Esophagus muscularis mucosa (tissue), 4 donors: ENCODE measurements at regions of chr5 and their contacts with region 1.

Region 1: GRCh38 chr5:128905571-128906110 is 59.6 kb upstream of the SLC27A6 start:
- DNase-seq: no peak
- H3K4me3 ChIP-seq: no peak overlapping the region
- H3K27ac ChIP-seq: no peak overlapping the region
- H3K4me1 ChIP-seq: peaks cover 0 to 16% (median 3%) of the 10 kb centered on the region in 4 donors
- H3K27me3 ChIP-seq: no peaks in the 10 kb centered on the region
- CTCF ChIP-seq: peak; percentile 77 to 87 (median 82)
- EP300 ChIP-seq: no peak
- POLR2A ChIP-seq: no peak

Region 2: DNA sequence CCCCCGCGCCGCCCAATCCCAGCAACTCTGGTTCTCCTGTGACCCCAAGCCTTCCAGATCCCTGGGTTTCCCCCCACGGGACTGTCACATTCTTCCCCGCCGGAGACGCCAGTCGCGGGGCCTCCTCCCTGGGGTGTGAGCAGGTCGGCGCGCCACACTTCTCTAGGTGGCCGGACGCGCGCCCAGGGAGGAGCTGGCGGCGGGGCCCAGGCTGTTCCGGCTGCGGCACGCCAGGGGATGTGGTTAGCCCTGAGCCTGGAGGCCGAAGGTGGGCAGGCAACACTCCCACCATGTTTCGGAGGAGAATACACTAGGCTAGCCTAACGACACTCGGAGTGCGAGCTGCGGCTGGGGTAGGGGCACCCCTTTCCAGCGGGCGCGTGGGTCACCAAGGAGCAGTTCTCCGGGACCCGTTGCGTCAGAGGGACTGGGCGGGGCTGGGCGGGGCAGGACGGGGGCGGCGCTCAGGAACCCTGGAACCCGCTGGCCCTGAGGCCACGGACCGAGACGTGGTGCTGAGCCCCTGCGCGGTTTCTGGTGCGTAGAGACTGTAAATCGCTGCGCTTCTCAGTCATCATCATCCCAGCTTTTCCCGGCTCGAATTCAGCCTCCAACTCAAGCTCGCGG is 59.5 kb after region 1 on chr5 and contains the start of gene SLC27A6:
- intact Hi-C with region 1: loop called (anchors 10 kb)
- DNase-seq: no peak
- H3K4me3 ChIP-seq: peak within 1 kb of the TSS; percentile 52 to 72 (median 63)
- H3K27ac ChIP-seq: peak within 1 kb of the TSS; percentile 70 to 83 (median 78)
- H3K4me1 ChIP-seq: peaks cover 0 to 19% (median 10%) of the 10 kb centered on the region in 4 donors
- H3K27me3 ChIP-seq: peaks cover 0 to 5% (median 0%) of the 10 kb centered on the region in 4 donors
- CTCF ChIP-seq: peak in 1 of 3 experiments; percentile 16
- EP300 ChIP-seq: no peak
- POLR2A ChIP-seq: no peak
- total RNA-seq, gene SLC27A6: 22.5 to 77.1 (median 48.9) TPM

Region 3: GRCh38 chr5:129053438-129053837 is 147.8 kb after region 1 on chr5:
- intact Hi-C with region 1: loop called (anchors 5 kb)
- DNase-seq: no peak
- H3K4me3 ChIP-seq: no peak overlapping the region
- H3K27ac ChIP-seq: no peak overlapping the region
- H3K4me1 ChIP-seq: peaks cover 0 to 24% (median 17%) of the 10 kb centered on the region in 4 donors
- H3K27me3 ChIP-seq: no peaks in the 10 kb centered on the region
- CTCF ChIP-seq: peak; percentile 13 to 44 (median 41)
- EP300 ChIP-seq: no peak
- POLR2A ChIP-seq: no peak

Region 4: GRCh38 chr5:129101803-129102202 is 196.2 kb after region 1 on chr5:
- intact Hi-C with region 1: loop called (anchors 10 kb)
- DNase-seq: no peak
- H3K4me3 ChIP-seq: no peak overlapping the region
- H3K27ac ChIP-seq: peak overlapping the region; percentile 2 to 49 (median 22)
- H3K4me1 ChIP-seq: peaks cover 57 to 73% (median 65%) of the 10 kb centered on the region in 4 donors
- H3K27me3 ChIP-seq: no peaks in the 10 kb centered on the region
- CTCF ChIP-seq: no peak
- EP300 ChIP-seq: no peak
- POLR2A ChIP-seq: no peak

Region 5: GRCh38 chr5:129767906-129768380 is 862.3 kb after region 1 on chr5:
- intact Hi-C with region 1: loop called (anchors 10 kb)
- DNase-seq: no peak
- H3K4me3 ChIP-seq: no peak overlapping the region
- H3K27ac ChIP-seq: no peak overlapping the region
- H3K4me1 ChIP-seq: peaks cover 0 to 6% (median 0%) of the 10 kb centered on the region in 4 donors
- H3K27me3 ChIP-seq: no peaks in the 10 kb centered on the region
- CTCF ChIP-seq: peak in 2 of 3 experiments; percentile 94 to 99
- EP300 ChIP-seq: no peak
- POLR2A ChIP-seq: no peak

Region 6: GRCh38 chr5:130455175-130455574 is 1549.5 kb after region 1 on chr5:
- intact Hi-C with region 1: no loop called
- DNase-seq: no peak
- H3K4me3 ChIP-seq: no peak overlapping the region
- H3K27ac ChIP-seq: no peak overlapping the region
- H3K4me1 ChIP-seq: no peaks in the 10 kb centered on the region
- H3K27me3 ChIP-seq: peaks cover 0 to 5% (median 0%) of the 10 kb centered on the region in 4 donors
- CTCF ChIP-seq: no peak
- EP300 ChIP-seq: no peak
- POLR2A ChIP-seq: no peak